Left ventricle myocardium superior (tissue), 1 donor: ENCODE measurements at regions of chr14 and their contacts with region 1.

Region 1: GRCh38 chr14:31819304-31819703 is 257.8 kb upstream of the ARHGAP5 start:
- DNase-seq: no peak
- ATAC-seq: no peak

Region 2: DNA sequence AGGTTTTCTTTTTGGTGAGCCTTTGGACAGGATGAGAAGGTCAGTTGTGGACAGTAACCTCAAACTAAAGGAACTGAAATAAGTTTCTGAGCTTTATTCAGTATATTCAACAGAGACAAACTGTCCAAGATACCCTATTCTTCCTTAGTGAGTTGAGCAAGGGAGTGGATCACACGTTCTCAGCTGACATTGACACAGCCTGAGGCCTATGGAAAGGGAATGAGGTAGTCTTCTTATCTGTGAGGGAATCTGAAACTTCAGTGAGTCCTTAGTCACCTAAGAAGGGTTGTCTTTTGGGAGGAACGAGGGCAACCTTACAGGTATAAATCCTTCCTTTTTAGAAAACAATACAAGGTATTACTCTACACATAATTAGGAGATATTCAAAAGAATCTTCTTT is 263.1 kb before region 1 on chr14:
- intact Hi-C with region 1: no loop called
- DNase-seq: no peak
- ATAC-seq: no peak

Region 3: DNA sequence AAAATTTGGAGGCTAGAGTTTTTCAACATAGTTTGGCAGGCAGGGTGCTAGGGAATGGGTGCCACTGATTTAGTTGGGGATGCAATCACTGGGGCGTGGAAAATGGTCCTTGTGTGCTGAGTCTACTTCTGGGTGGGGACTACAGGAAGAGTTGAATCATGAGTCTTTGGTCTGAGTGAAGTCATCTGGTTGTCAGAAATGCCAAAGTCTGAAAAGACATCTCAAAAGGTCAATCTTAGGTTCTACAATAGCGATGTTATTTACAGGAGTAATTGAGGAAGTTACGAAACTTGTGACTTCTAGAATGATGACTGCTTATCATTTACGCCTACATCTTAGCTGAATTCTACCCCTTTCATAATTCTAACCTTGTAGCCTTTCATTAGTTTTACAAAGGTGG is 49.0 kb before region 1 on chr14:
- intact Hi-C with region 1: loop called (anchors 2 kb)
- DNase-seq: no peak
- ATAC-seq: peak; percentile 77

Region 4: DNA sequence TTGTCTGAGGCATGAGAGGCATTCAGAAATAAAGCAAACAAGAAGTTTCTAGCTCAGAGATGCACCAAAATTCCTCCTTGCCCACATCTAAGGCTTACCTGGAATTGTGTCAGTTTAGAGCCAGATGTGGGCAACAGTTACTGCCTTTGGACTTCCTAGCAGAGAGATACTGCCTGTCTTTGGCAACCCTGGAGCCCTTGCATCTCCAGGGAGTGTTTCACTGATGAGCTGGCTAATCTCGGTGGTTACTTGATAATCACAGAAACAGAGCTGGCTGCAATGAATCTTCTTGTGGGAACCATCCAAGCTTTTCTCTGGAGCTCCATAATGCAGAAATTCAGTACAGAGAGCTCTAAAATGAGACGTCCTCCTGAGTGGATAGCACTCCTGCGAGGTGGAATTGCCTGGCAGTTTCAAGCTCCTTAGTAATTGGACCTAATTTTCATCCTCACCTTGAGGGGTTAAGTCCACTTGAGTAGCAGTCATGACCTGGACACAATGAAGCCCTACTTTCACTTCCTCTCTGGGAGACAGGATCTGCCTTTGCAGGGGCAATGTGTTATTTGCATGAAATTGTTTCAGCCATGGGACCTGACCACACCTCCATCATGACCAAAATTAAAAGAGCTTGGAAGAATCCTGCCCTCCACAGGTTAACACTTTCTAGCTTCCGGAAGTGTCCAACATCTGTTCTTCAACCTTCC is 149.0 kb after region 1 on chr14:
- intact Hi-C with region 1: no loop called
- DNase-seq: no peak
- ATAC-seq: peak; percentile 24